ENCODE measurements at regions of chr10 and their contacts with region 1.

Region 1: GRCh38 chr10:87734987-87735827 is 75.5 kb downstream of the PAPSS2 start:
- DNase-seq: peak; percentile 66
- H3K4me3 ChIP-seq: no peak overlapping the region
- H3K27ac ChIP-seq: 0 out of 4 replicates have a peak overlapping the region, but pooled peaks of 1 of the 2 experiments have one; percentile 22
- H3K4me1 ChIP-seq: peaks cover 4% of the 10 kb centered on the region in 2 experiments; a peak in 1 of 4 replicates
- H3K27me3 ChIP-seq: no peaks in the 10 kb centered on the region
- CTCF ChIP-seq: peak; percentile 89
- EP300 ChIP-seq: 0 out of 4 replicates have a peak, but pooled peaks of 1 of the 2 experiments have one; percentile 8
- RAD21 ChIP-seq: peak; percentile 90

Region 2: DNA sequence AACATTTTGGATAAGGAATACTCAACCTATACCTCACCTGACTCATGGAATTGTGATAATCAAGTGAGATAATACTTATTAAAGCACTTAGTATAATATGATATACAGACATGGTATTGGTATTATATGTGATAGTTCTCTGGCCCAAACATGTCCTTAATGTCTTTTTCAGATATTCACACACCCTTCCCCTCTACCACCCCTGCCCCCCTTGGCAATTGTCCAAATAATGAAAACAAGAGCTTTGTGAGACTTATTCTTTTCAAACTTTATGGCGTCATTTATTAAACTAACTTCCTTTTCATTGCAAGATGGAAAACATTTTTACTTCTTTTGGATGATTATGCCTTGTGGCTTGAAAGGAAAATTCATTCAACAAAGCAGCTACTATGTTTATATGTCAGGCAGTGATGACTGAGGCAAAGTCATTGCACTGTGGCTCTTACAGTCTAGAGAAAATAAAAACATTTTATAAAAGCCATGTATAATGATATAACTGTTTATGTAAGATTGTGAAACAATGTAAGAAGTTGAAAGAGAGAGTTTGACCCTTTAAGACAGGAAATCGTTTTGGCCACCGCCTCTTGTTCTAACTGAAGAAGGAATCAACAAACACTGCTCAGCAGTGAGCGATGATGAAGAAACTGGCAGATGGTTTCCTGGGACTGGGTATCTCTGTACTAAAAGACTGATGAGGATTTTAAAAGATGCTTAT is 203.1 kb before region 1 on chr10:
- CTCF ChIA-PET with region 1: interaction called, 17 read pairs
- POLR2A ChIA-PET with region 1: no interaction called
- DNase-seq: no peak
- H3K4me3 ChIP-seq: no peak overlapping the region
- H3K27ac ChIP-seq: 0 out of 4 replicates have a peak overlapping the region, but pooled peaks of 1 of the 2 experiments have one; percentile 7
- H3K4me1 ChIP-seq: peaks cover 0 to 5% of the 10 kb centered on the region in 2 experiments; a peak in 1 of 4 replicates
- H3K27me3 ChIP-seq: no peaks in the 10 kb centered on the region
- CTCF ChIP-seq: no peak
- EP300 ChIP-seq: no peak
- RAD21 ChIP-seq: no peak

Region 3: GRCh38 chr10:87659571-87660483 is 75.4 kb before region 1 on chr10 and contains the start of gene PAPSS2:
- CTCF ChIA-PET with region 1: interaction called, 49 read pairs
- POLR2A ChIA-PET with region 1: no interaction called
- DNase-seq: peak; percentile 83
- H3K4me3 ChIP-seq: peak within 1 kb of the TSS; percentile 86 to 95
- H3K27ac ChIP-seq: peak within 1 kb of the TSS in 1 of 2 experiments; percentile 82; a peak in 3 of 4 replicates
- H3K4me1 ChIP-seq: peaks cover 4 to 10% of the 10 kb centered on the region in 2 experiments; a peak in 3 of 4 replicates
- H3K27me3 ChIP-seq: no peaks in the 10 kb centered on the region
- CTCF ChIP-seq: peak; percentile 38; the same call in 1 of the 2 replicates
- EP300 ChIP-seq: peak in 1 of 2 experiments; percentile 42; a peak in 1 of 4 replicates
- RAD21 ChIP-seq: no peak
- polyA plus RNA-seq, gene PAPSS2: 50.0 and 55.0 TPM in 2 replicates

Region 4: GRCh38 chr10:87684001-87684638 is 51.1 kb before region 1 on chr10:
- CTCF ChIA-PET with region 1: no interaction called
- POLR2A ChIA-PET with region 1: no interaction called
- DNase-seq: no peak
- H3K4me3 ChIP-seq: no peak overlapping the region
- H3K27ac ChIP-seq: no peak overlapping the region
- H3K4me1 ChIP-seq: 0 out of 4 replicates have a peak, but pooled peaks cover 0 to 3% of the 10 kb centered on the region in 2 experiments
- H3K27me3 ChIP-seq: no peaks in the 10 kb centered on the region
- CTCF ChIP-seq: no peak
- EP300 ChIP-seq: no peak
- RAD21 ChIP-seq: no peak

Region 5: GRCh38 chr10:87715552-87716347 is 19.5 kb before region 1 on chr10:
- CTCF ChIA-PET with region 1: interaction called, 23 read pairs
- POLR2A ChIA-PET with region 1: no interaction called
- DNase-seq: no peak
- H3K4me3 ChIP-seq: no peak overlapping the region
- H3K27ac ChIP-seq: no peak overlapping the region
- H3K4me1 ChIP-seq: no peaks in the 10 kb centered on the region; a peak in 1 of 4 replicates
- H3K27me3 ChIP-seq: no peaks in the 10 kb centered on the region
- CTCF ChIP-seq: no peak
- EP300 ChIP-seq: no peak
- RAD21 ChIP-seq: no peak

Region 6: GRCh38 chr10:87750001-87750671 is 14.9 kb after region 1 on chr10:
- CTCF ChIA-PET with region 1: interaction called, 13 read pairs
- POLR2A ChIA-PET with region 1: no interaction called
- DNase-seq: no peak
- H3K4me3 ChIP-seq: no peak overlapping the region
- H3K27ac ChIP-seq: peak overlapping the region; percentile 53 to 55
- H3K4me1 ChIP-seq: peaks cover 8 to 15% of the 10 kb centered on the region in 2 experiments; a peak in 3 of 4 replicates
- H3K27me3 ChIP-seq: no peaks in the 10 kb centered on the region
- CTCF ChIP-seq: no peak
- EP300 ChIP-seq: peak in 1 of 2 experiments; percentile 35; a peak in 1 of 4 replicates
- RAD21 ChIP-seq: no peak